Activated CD4-positive, alpha-beta T cell treated with anti-CD3 and anti-CD28 coated beads for 36 hours (primary cell): ENCODE measurements at regions of chr4 and their contacts with region 1.

Region 1: DNA sequence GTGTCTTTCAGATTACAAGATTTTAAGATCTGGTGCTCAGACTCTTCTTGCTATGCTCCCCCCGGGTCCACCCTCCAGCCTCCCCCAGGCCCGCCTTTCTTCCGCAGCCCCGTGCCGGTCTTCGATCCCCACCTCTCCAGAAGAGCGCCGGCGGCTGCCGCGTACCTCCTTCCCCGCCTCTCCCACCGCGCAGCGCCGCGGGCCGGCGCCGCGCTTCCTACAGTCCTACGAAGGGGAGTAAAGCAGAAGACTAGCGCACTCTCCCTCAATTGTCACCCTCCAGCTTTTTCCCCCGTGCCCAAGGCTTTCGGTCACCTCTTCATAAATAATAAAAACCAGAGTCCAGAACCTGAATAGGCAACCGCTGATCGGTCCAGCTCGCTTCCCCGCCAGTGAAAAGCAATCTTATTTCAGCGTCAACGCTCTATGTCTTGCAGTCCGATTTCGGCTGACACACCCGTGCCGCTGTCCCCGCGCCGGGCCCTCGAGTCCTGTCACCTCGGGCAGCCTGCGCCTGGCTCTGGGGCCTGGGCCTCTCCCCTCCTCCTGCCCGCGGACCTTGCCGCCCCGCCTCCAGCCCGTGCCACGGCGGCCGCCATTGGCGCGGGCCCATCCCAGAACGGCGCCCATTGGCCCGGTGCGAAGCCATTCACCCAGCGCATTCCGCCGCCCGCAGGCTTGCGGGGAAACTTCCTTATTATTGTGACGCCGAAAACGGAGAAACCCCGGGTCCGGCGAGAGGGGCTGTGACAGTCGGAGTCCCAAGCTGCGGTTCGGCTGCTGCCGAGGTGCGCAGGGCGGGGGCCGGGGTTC is at the start of gene HERC3:
- DNase-seq: peak; percentile 92
- ATAC-seq: peak; percentile 87
- H3K4me3 Mint-ChIP-seq: peak within 1 kb of the TSS; percentile 90
- H3K27ac Mint-ChIP-seq: peak within 1 kb of the TSS; percentile 90
- H3K4me1 Mint-ChIP-seq: peaks cover 43% of the 10 kb centered on the region
- H3K27me3 Mint-ChIP-seq: no peaks in the 10 kb centered on the region
- total RNA-seq, gene HERC3: 26.2 to 41.8 TPM

Region 2: GRCh38 chr4:86934771-86935565 is 1657.0 kb before region 1 on chr4 and contains the start of gene AFF1:
- CTCF ChIA-PET with region 1: no interaction called
- POLR2A ChIA-PET with region 1: no interaction called
- intact Hi-C with region 1: loop called in 1 of 2 experiments (anchors 10 kb)
- DNase-seq: peak; percentile 94
- ATAC-seq: peak; percentile 68
- H3K4me3 Mint-ChIP-seq: peak within 1 kb of the TSS; percentile 84
- H3K27ac Mint-ChIP-seq: peak within 1 kb of the TSS; percentile 97
- H3K4me1 Mint-ChIP-seq: peaks cover 40% of the 10 kb centered on the region
- H3K27me3 Mint-ChIP-seq: no peaks in the 10 kb centered on the region
- total RNA-seq, gene AFF1: 47.3 to 57.8 TPM

Region 3: GRCh38 chr4:88378691-88379559 is 213.1 kb before region 1 on chr4 and contains the start of gene HERC6:
- CTCF ChIA-PET with region 1: no interaction called
- POLR2A ChIA-PET with region 1: no interaction called
- intact Hi-C with region 1: loop called in 1 of 2 experiments (anchors 1 kb)
- DNase-seq: peak; percentile 88
- ATAC-seq: peak; percentile 47
- H3K4me3 Mint-ChIP-seq: peak within 1 kb of the TSS; percentile 75
- H3K27ac Mint-ChIP-seq: peak within 1 kb of the TSS; percentile 84
- H3K4me1 Mint-ChIP-seq: peaks cover 39% of the 10 kb centered on the region
- H3K27me3 Mint-ChIP-seq: no peaks in the 10 kb centered on the region
- total RNA-seq, gene HERC6: 7.3 to 9.3 TPM

Region 4: GRCh38 chr4:88523325-88524129 is 68.5 kb before region 1 on chr4 and contains the start of gene PYURF:
- CTCF ChIA-PET with region 1: interaction called, 5 read pairs
- POLR2A ChIA-PET with region 1: no interaction called
- intact Hi-C with region 1: loop called (anchors 1 to 2 kb)
- DNase-seq: peak; percentile 88
- ATAC-seq: peak; percentile 87
- H3K4me3 Mint-ChIP-seq: peak within 1 kb of the TSS; percentile 92
- H3K27ac Mint-ChIP-seq: peak within 1 kb of the TSS; percentile 88
- H3K4me1 Mint-ChIP-seq: peaks cover 45% of the 10 kb centered on the region
- H3K27me3 Mint-ChIP-seq: no peaks in the 10 kb centered on the region
- total RNA-seq, gene PYURF: 27.3 to 44.1 TPM

Region 5: DNA sequence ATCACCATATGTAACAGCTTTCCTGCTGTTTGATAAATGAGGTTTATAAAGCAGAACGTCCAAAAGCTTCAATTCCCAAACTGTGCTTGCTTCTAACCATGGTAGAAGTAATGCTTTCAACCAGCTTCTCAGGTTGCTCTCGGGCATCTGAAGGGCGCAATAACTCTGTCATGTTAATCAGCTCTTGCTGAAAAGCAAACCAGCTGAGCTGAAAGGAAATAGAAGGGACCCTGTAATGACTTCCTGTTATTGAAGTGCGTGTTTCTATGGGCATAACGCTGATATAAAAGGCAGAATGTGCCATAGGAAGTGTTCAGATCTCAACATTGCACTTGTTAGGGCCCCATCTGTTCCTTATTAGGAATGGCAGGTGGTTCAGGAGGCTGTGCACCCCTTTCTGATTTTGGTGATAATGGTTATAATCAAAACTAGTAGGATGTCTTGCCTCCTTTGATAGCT is 21.5 kb after region 1 on chr4:
- CTCF ChIA-PET with region 1: interaction called, 5 read pairs
- POLR2A ChIA-PET with region 1: interaction called, 6 read pairs
- intact Hi-C with region 1: loop called (anchors 1 kb)
- DNase-seq: peak; percentile 43
- ATAC-seq: peak; percentile 75
- H3K4me3 Mint-ChIP-seq: peak overlapping the region; percentile 59
- H3K27ac Mint-ChIP-seq: peak overlapping the region; percentile 90
- H3K4me1 Mint-ChIP-seq: peaks cover 78% of the 10 kb centered on the region
- H3K27me3 Mint-ChIP-seq: no peaks in the 10 kb centered on the region

Region 6: GRCh38 chr4:88681209-88681608 is 89.2 kb after region 1 on chr4:
- CTCF ChIA-PET with region 1: no interaction called
- POLR2A ChIA-PET with region 1: no interaction called
- intact Hi-C with region 1: no loop called
- DNase-seq: no peak
- ATAC-seq: no peak
- H3K4me3 Mint-ChIP-seq: no peak overlapping the region
- H3K27ac Mint-ChIP-seq: no peak overlapping the region
- H3K4me1 Mint-ChIP-seq: peaks cover 2% of the 10 kb centered on the region
- H3K27me3 Mint-ChIP-seq: no peaks in the 10 kb centered on the region

Region 7: DNA sequence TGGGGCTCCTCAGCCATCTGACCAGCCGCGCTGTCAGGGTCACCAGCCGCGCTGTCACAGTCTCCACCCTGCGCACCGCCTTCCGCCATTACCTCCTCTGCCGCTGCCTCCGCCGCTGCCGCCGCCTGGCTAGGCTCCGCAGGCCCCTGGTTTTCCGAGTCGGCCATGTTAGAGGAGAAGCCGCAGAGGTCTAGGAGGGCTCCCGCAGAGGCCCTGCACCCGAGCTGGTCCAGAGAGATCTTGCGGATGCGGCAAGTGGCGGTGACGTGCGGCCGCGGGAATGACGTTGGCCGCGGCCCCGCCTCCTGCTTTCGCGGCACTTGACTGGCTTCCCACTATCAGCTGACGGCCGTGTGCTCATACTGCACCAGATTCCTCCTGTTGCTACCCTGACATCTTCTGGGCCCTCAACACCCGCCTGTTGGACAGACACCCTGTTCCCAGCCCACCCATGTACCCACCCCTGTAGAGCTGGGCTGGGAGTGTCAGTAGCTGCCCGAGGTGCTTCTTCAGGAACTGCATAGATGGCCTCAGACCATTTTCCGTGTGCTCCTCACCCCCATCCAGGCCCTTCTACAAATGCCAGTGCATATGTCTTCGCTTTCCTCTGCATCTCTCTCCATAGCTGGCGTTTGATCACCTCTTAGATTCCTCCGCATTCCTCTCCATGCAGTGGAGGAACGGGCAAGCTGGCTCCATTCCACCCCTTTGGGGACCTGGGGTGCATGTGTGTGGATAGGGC is 105.8 kb after region 1 on chr4 and contains the start of gene NAP1L5:
- CTCF ChIA-PET with region 1: no interaction called
- POLR2A ChIA-PET with region 1: no interaction called
- intact Hi-C with region 1: loop called (anchors 1 to 5 kb)
- DNase-seq: peak; percentile 81
- ATAC-seq: peak; percentile 89
- H3K4me3 Mint-ChIP-seq: peak within 1 kb of the TSS; percentile 75
- H3K27ac Mint-ChIP-seq: peak within 1 kb of the TSS; percentile 62
- H3K4me1 Mint-ChIP-seq: peaks cover 10% of the 10 kb centered on the region
- H3K27me3 Mint-ChIP-seq: no peaks in the 10 kb centered on the region
- total RNA-seq, gene NAP1L5: 4.9 to 5.2 TPM

Region 8: DNA sequence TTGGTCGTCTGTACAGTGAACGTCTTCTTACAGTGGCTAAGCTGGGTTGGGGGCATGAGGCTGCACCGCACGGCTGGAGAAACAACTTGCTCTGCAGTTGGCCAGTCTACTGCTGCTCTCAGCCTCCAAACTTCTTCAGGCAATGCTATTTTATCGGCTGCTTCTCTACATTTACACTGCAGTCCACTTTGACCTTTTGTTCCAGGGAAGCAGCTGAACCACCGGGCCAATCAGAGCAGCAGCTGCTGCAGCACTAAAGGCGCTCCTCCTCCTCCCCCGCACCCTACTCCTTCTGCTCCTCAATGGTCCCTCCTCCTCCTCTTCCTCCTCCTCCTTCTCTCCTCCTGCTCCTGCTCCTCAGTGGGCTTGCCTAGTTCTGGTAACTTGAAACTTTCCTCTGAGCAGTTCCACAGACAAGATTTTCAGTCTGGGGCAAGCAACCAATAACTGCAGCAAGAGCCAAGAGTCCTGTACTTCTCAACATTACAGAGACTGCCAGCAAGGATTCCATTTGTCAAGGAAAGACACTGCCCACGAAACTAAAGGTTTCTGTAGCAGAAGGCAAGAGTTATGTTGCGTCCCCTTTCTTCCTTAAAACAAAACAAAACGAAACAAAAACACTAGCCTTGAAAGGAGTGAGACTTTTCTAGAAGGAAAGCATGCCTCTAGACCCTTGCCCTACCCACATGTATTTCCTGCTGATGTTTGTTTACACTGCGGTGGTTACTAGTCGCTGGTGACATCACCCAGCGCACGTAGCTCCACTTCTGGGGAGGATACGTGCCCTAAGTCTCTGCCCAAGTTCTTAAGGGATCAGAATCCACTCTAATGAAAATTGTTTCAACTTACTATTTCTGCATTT is 231.3 kb after region 1 on chr4:
- CTCF ChIA-PET with region 1: interaction called, 4 read pairs
- POLR2A ChIA-PET with region 1: no interaction called
- intact Hi-C with region 1: loop called in 1 of 2 experiments (anchors 2 kb)
- DNase-seq: peak; percentile 83
- ATAC-seq: peak; percentile 96
- H3K4me3 Mint-ChIP-seq: peak overlapping the region; percentile 77
- H3K27ac Mint-ChIP-seq: peak overlapping the region; percentile 88
- H3K4me1 Mint-ChIP-seq: peaks cover 38% of the 10 kb centered on the region
- H3K27me3 Mint-ChIP-seq: no peaks in the 10 kb centered on the region